Dendritic cell treated with granulocyte-macrophage colony-stimulating factor and Interleukin-4, amounts not matched to agents 40 ng/mL and 50 ng/mL, for 4 days (primary cell): ENCODE measurements at regions of chr16 and their contacts with region 1.

Region 1: DNA sequence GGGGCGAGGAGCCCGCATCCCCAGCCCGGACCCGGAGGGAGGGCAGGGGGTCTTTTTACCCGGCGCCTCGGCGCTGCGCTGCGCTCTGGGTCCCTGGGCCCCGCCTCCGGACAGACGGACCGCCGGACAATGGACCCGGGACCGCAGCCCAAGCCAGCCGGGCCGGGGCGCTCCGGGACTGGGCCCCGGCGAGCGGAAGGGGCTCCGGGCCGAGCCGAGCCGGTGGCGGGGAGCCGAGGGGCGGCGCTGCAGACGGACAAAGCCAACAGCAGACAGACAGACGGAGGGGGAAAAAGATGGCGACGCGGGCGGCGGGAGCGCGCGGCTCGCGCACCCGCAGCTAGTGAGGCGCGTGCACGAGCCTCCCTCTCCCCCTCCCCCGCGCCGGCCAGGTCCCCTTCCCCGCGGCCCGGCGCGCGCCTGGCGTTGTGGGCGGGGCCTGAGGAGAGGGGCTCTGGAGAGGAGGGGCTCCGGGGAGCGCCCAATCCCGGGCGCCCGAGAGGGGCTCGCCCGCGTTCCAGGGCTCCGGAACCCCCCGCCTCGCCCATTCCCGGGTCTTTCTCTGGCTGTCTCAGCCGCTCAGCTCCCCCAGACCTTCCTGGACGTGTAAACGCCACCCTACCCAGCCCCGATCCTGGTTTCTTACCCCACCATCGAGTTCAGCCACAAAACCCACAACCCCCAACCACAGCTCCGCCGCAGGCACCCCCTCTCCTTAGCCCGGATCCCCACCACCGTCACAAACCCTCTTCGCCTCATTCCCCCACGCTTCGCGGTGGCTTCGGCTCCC is at the start of gene ZNF821:
- H3K4me3 Mint-ChIP-seq: peak within 1 kb of the TSS; percentile 99
- H3K27ac Mint-ChIP-seq: peak within 1 kb of the TSS; percentile 95
- H3K4me1 Mint-ChIP-seq: peaks cover 47% of the 10 kb centered on the region
- H3K27me3 Mint-ChIP-seq: peaks cover 5% of the 10 kb centered on the region

Region 2: GRCh38 chr16:71808593-71809459 is 75.2 kb before region 1 on chr16 and contains the start of gene AP1G1:
- intact Hi-C with region 1: loop called (anchors 5 kb)
- H3K4me3 Mint-ChIP-seq: peak within 1 kb of the TSS; percentile 100
- H3K27ac Mint-ChIP-seq: peak within 1 kb of the TSS; percentile 98
- H3K4me1 Mint-ChIP-seq: peaks cover 19% of the 10 kb centered on the region
- H3K27me3 Mint-ChIP-seq: no peaks in the 10 kb centered on the region

Region 3: GRCh38 chr16:71845639-71846430 is 38.2 kb before region 1 on chr16 and contains the start of gene ATXN1L:
- intact Hi-C with region 1: loop called (anchors 5 kb)
- H3K4me3 Mint-ChIP-seq: peak within 1 kb of the TSS; percentile 90
- H3K27ac Mint-ChIP-seq: peak within 1 kb of the TSS; percentile 96
- H3K4me1 Mint-ChIP-seq: peaks cover 20% of the 10 kb centered on the region
- H3K27me3 Mint-ChIP-seq: no peaks in the 10 kb centered on the region

Region 4: DNA sequence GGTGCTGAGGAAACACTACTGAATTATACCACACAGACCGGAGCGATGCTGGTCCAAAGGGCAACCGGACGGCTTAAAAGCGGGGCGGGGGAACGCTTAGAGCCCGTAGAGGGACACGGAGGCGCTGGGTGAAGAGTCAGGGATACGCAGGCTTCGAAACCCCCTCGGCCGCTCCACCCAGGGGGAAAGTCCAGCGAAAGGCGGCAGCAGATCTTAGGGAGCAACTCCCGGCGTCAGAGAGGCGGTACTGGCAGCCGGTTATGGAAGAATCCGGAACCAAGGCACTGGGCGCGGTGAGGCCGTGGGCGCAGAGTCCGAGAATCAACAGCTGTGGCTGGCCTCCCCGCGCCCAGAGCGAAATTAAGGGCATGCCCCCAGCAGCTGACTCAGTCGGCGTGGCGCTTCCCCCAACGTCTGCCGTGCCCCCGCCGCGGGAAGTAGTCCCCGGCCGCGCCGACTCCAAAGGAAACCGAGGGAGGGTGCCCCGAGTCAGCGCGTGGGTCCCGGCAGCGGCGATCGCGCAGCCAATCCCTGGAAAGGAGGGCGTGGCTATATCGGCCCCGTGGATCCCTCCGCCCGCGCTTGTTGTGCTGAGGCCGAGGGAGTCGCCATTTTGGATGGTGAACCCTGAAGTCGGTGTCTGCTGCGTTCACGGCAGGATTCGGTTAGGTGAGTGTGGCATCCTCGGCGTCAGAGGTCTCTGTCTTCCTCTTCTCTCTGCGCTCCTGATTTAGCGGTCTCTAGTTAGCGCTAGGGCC is 11.1 kb after region 1 on chr16 and contains the start of gene IST1:
- intact Hi-C with region 1: loop called (anchors 1 kb)
- H3K4me3 Mint-ChIP-seq: peak within 1 kb of the TSS; percentile 91
- H3K27ac Mint-ChIP-seq: peak within 1 kb of the TSS; percentile 98
- H3K4me1 Mint-ChIP-seq: peaks cover 30% of the 10 kb centered on the region
- H3K27me3 Mint-ChIP-seq: no peaks in the 10 kb centered on the region

Region 5: DNA sequence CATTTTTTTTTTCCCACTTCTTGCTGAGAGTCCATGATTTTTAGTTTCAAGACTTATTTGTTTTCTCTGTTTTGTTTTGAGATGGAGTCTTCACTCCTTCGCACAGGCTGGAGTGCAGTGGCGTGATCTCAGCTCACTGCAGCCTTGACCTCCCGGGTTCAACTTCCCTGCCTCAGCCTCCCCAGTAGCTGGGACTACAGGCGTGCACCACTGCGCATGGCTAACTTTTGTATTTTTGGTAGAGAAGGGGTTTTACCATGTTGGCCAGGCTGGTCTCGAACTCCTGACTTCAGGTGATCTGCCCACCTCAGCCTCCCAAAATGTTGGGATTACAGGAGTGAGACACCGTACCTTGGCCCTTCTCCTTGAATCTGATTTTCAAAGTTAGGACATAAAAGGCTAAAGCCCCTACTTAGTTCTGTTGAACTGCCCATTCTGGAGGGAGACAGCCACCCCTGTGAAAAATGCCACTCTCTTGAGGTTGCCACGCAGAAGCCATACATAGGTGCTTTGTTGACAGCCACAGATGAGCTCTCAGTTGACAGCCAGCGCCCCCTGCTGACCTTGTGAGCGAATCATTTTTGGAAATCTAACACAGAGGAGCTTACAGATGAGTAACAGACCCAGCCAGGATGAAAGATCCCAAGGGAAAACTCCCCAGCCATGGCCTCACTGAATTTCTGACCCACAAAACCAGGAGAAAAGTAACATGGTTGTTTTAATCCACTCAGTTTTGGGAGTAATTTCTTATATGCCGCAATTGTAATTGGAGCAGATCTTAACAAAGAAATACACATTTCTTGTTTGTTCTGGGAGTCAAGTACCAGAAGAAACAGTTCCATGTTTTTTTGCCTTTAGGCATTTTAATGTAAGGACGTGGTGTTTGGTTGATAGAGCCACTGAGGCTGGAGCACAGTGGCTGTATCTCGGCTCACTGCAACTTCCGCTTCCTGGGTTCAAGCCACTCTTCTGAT is 77.3 kb after region 1 on chr16:
- intact Hi-C with region 1: loop called (anchors 5 kb)
- H3K4me3 Mint-ChIP-seq: no peak overlapping the region
- H3K27ac Mint-ChIP-seq: no peak overlapping the region
- H3K4me1 Mint-ChIP-seq: peaks cover 13% of the 10 kb centered on the region
- H3K27me3 Mint-ChIP-seq: no peaks in the 10 kb centered on the region

Region 6: GRCh38 chr16:72093448-72094265 is 209.6 kb after region 1 on chr16 and contains the starts of genes DHX38 and TXNL4B:
- intact Hi-C with region 1: loop called (anchors 10 kb)
- H3K4me3 Mint-ChIP-seq: peak within 1 kb of the TSS; percentile 98
- H3K27ac Mint-ChIP-seq: peak within 1 kb of the TSS; percentile 93
- H3K4me1 Mint-ChIP-seq: peaks cover 41% of the 10 kb centered on the region
- H3K27me3 Mint-ChIP-seq: no peaks in the 10 kb centered on the region